Mammary epithelial cell (primary cell): ENCODE measurements at regions of chr7 and their contacts with region 1.

Region 1: DNA sequence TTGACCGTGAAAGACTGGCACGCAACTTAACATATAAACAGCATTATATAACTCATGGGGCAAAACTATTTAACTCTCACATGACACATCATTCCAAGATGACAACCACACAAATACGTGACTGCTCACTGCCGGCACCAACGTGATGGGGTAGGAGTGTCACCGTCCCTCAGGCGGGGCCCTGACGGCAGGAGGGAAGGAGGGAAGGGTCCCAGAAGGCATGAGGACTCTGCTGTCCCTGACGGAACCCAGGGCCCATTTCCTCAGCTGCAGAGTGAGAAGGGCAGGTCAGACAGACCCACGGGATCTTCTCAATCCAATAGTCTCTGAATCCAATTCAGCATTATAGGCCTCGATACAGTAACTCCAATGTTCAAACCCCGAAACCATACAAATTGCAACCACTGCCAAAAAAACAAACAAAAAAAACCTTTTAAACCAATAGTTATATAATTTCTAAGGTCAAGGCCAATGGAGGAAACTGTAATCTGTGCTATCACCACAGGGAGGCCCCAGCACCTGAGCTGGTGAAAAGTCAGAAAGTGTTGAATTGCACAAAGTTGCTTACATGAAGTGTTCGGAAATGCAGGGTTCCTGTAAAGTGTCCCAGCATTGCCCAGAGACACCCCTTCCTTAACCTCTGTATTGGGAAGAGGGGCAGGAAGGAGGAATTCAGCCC is 137.4 kb downstream of the TNS3 start:
- DNase-seq: peak; percentile 16
- H3K4me3 ChIP-seq: no peak overlapping the region
- H3K27ac ChIP-seq: no peak overlapping the region
- H3K4me1 ChIP-seq: no peaks in the 10 kb centered on the region
- H3K27me3 ChIP-seq: no peaks in the 10 kb centered on the region
- CTCF ChIP-seq: peak; percentile 55 to 71

Region 2: GRCh38 chr7:46695051-46695707 is 749.3 kb before region 1 on chr7:
- CTCF ChIA-PET with region 1: no interaction called
- dilution Hi-C with region 1: no loop called
- in situ Hi-C with region 1: no loop called
- intact Hi-C with region 1: no loop called
- DNase-seq: no peak
- H3K4me3 ChIP-seq: no peak overlapping the region
- H3K27ac ChIP-seq: no peak overlapping the region
- H3K4me1 ChIP-seq: no peaks in the 10 kb centered on the region
- H3K27me3 ChIP-seq: no peaks in the 10 kb centered on the region
- CTCF ChIP-seq: no peak

Region 3: GRCh38 chr7:47416492-47417480 is 27.7 kb before region 1 on chr7:
- CTCF ChIA-PET with region 1: no interaction called
- dilution Hi-C with region 1: no loop called
- in situ Hi-C with region 1: no loop called
- intact Hi-C with region 1: no loop called
- DNase-seq: no peak
- H3K4me3 ChIP-seq: no peak overlapping the region
- H3K27ac ChIP-seq: no peak overlapping the region
- H3K4me1 ChIP-seq: no peaks in the 10 kb centered on the region
- H3K27me3 ChIP-seq: no peaks in the 10 kb centered on the region
- CTCF ChIP-seq: no peak

Region 4: GRCh38 chr7:47470567-47471359 is 26.2 kb after region 1 on chr7:
- CTCF ChIA-PET with region 1: no interaction called
- dilution Hi-C with region 1: no loop called
- in situ Hi-C with region 1: no loop called
- intact Hi-C with region 1: no loop called
- DNase-seq: no peak
- H3K4me3 ChIP-seq: no peak overlapping the region
- H3K27ac ChIP-seq: no peak overlapping the region
- H3K4me1 ChIP-seq: peaks cover 16% of the 10 kb centered on the region
- H3K27me3 ChIP-seq: no peaks in the 10 kb centered on the region
- CTCF ChIP-seq: no peak

Region 5: DNA sequence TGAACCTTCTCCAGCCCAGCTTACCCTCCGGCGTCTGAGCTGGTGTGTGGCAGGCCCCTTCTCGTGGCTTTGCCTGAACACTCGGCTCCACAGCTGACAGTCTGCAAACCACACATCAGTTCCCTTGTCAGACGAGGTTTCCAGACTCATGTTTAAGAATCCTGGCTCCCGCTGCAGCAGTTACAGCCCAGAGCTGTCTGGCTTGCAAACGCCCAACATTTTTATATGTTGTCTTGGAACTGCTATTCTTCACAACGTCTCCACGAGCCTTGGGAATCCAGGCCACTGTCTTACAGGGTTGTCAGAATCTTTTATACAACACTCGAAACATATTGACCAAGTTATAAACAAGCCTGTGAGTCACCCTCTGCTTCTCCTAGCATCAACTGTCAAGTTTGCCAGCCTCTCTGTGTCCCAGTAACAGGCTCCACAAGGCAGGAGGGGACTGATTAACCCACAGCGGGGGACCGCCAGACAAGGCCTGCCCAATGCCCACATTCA is 69.3 kb after region 1 on chr7:
- CTCF ChIA-PET with region 1: no interaction called
- dilution Hi-C with region 1: no loop called
- in situ Hi-C with region 1: no loop called
- intact Hi-C with region 1: no loop called
- DNase-seq: no peak
- H3K4me3 ChIP-seq: no peak overlapping the region
- H3K27ac ChIP-seq: no peak overlapping the region
- H3K4me1 ChIP-seq: peaks cover 6% of the 10 kb centered on the region
- H3K27me3 ChIP-seq: no peaks in the 10 kb centered on the region
- CTCF ChIP-seq: no peak

Region 6: GRCh38 chr7:47571331-47572093 is 127.0 kb after region 1 on chr7:
- CTCF ChIA-PET with region 1: no interaction called
- dilution Hi-C with region 1: no loop called
- in situ Hi-C with region 1: no loop called
- intact Hi-C with region 1: loop called (anchors 5 kb)
- DNase-seq: peak; percentile 61
- H3K4me3 ChIP-seq: peak overlapping the region in 1 of 3 experiments; percentile 23
- H3K27ac ChIP-seq: no peak overlapping the region
- H3K4me1 ChIP-seq: peaks cover 47% of the 10 kb centered on the region
- H3K27me3 ChIP-seq: no peaks in the 10 kb centered on the region
- CTCF ChIP-seq: peak in 1 of 2 donors; percentile 5

Region 7: GRCh38 chr7:47757921-47758411 is 313.4 kb after region 1 on chr7:
- CTCF ChIA-PET with region 1: no interaction called
- dilution Hi-C with region 1: no loop called
- in situ Hi-C with region 1: no loop called
- intact Hi-C with region 1: loop called (anchors 1 kb)
- DNase-seq: peak; percentile 67
- H3K4me3 ChIP-seq: no peak overlapping the region
- H3K27ac ChIP-seq: peak overlapping the region; percentile 94
- H3K4me1 ChIP-seq: peaks cover 29% of the 10 kb centered on the region
- H3K27me3 ChIP-seq: no peaks in the 10 kb centered on the region
- CTCF ChIP-seq: no peak